ENCODE measurements at regions of chr10 and their contacts with region 1.

Region 1: DNA sequence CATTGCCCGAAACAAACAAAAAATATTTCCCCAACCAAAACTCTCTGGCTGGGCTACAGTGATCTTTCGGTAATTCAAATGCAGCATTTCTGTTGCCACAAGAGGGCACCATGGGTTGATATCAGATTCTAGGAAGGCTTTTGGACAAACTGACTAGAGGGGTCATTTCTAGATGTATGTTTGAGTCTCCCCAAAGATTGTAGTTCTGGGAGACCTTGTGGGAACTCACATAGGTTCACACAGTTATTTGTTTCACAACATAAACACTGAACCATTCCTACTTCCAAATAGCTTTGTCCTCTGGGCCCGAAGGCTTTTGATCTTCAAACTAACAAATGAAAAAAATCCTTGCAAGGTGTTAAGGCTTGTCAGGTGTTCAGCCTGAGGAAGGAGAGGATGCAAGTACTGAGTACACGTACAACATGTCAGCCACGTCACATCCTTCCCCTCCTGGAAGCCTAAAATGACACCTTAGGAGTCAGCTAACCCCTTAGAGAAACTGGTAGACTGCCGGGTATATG is 37.0 kb upstream of the IL15RA start:
- DNase-seq: peak; percentile 86
- H3K4me3 ChIP-seq: peak overlapping the region; percentile 4
- H3K27ac ChIP-seq: peak overlapping the region; percentile 68
- H3K4me1 ChIP-seq: peaks cover 19% of the 10 kb centered on the region
- CTCF ChIP-seq: peak; percentile 99

Region 2: DNA sequence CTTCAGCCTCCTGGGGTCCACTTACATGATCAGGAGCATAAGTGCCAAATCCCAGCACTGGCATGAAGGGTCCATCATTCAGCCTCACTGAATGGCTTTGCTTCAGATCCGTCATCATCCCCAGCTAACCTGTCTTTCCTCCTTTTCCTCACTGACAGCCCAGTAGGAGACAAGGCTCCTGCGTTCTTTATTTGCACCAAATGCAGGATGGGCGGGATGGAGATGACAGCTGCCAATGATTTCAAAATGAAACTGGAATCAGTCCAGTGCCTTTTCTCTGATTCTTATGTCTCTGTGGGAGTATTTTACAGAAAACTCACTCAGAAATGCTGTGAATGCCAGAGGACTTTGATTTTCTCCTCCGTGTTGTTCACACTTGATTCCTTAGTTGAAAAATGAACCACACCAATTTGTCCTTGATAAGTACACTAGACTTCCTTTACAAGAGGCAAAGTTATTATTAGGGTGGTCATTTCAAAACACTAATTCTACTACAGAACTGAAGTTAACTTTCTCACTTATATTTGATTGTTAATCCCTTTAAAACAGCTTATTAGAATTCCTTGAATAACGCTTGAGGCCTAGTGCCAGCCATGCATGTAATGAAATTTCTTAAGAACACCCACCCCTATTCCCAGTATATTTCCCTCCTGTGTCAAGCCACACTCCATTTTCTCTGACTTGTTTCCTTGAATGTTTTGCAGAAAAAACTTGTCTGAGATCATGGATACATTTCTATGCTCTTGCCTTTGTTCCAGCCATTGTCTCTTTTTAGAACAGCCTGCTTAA is 829.1 kb before region 1 on chr10 and contains the start of gene AKR1C8:
- CTCF ChIA-PET with region 1: no interaction called
- POLR2A ChIA-PET with region 1: no interaction called
- intact Hi-C with region 1: no loop called
- DNase-seq: no peak
- H3K4me3 ChIP-seq: no peak within 1 kb of the TSS
- H3K27ac ChIP-seq: no peak within 1 kb of the TSS
- H3K4me1 ChIP-seq: no peaks in the 10 kb centered on the region
- CTCF ChIP-seq: no peak
- total RNA-seq, gene AKR1C8: not detected in 2 replicates

Region 3: DNA sequence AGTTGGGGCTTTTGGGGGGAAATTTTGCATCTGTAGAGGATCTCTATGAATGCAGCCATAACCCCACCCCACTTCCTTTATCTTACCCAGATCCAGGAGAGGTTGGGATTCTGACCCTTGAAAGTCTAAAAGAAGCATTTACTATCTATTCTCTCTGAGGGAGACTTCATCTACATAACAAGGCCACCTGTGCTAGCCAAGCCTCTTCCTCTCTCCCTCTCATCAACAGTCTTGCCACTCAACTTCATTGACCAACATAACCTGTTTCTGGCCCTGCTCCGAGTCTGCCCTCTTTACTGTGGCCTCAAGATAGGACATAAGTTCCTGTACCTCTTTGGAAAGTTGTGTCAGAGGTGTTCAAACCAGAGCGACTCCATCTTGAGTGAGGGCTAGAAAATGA is 629.1 kb before region 1 on chr10:
- CTCF ChIA-PET with region 1: no interaction called
- POLR2A ChIA-PET with region 1: no interaction called
- intact Hi-C with region 1: no loop called
- DNase-seq: no peak
- H3K4me3 ChIP-seq: no peak overlapping the region
- H3K27ac ChIP-seq: no peak overlapping the region
- H3K4me1 ChIP-seq: no peaks in the 10 kb centered on the region
- CTCF ChIP-seq: no peak

Region 4: GRCh38 chr10:6163364-6164270 is 149.3 kb after region 1 on chr10:
- CTCF ChIA-PET with region 1: no interaction called
- POLR2A ChIA-PET with region 1: no interaction called
- intact Hi-C with region 1: loop called (anchors 5 kb)
- DNase-seq: peak; percentile 97
- H3K4me3 ChIP-seq: peak overlapping the region; percentile 99
- H3K27ac ChIP-seq: peak overlapping the region; percentile 87
- H3K4me1 ChIP-seq: peaks cover 27% of the 10 kb centered on the region
- CTCF ChIP-seq: no peak

Region 5: GRCh38 chr10:6382081-6382480 is 367.8 kb after region 1 on chr10:
- CTCF ChIA-PET with region 1: no interaction called
- POLR2A ChIA-PET with region 1: no interaction called
- intact Hi-C with region 1: no loop called
- DNase-seq: peak; percentile 26
- H3K4me3 ChIP-seq: no peak overlapping the region
- H3K27ac ChIP-seq: no peak overlapping the region
- H3K4me1 ChIP-seq: no peaks in the 10 kb centered on the region
- CTCF ChIP-seq: no peak

Measured in OCI-LY7 (cell line).